ENCODE measurements at regions of chr2 and their contacts with region 1.

Region 1: GRCh38 chr2:1140389-1141003 is 189.8 kb downstream of the SNTG2 start:
- DNase-seq: peak; percentile 70
- ATAC-seq: peak; percentile 69
- H3K4me3 Mint-ChIP-seq: no peak overlapping the region
- H3K27ac Mint-ChIP-seq: no peak overlapping the region
- H3K4me1 Mint-ChIP-seq: peaks cover 24% of the 10 kb centered on the region
- H3K27me3 Mint-ChIP-seq: peaks cover 9% of the 10 kb centered on the region

Region 2: DNA sequence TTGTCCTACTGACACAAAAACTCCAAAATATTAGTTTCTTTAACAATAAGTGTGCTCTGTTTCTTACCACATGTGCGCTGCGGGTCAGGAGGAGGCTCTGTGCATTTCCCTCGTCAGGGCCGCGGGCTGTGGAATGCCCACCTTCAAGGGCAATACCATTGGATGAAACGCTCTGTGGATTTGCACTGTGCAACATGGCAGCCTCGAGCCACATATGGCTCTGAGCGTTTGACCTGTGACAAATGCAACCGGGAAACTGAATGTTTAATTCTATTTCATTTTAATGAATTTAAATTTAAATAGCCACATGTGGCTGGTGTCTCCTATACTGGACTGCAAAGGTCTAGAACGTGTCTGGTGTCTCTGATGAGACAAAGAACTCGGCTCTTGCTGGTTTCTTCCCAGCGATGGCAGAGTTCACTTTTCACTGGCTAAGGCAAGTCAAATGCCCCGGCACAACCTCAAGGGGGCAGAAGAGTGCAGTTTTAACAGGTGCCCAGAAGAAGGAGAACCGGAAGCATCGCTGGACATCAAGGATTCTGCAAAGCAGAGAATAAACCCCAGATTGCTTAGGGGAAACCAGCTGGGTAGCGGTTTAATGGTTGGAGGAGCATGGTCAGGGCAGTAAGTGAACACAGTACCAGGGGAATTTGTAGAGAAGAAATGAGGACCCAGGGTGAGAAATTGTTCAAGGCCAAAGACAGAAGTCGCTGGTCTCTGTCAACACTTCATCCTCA is 426.3 kb before region 1 on chr2:
- CTCF ChIA-PET with region 1: no interaction called
- POLR2A ChIA-PET with region 1: no interaction called
- intact Hi-C with region 1: loop called in 1 of 2 experiments (anchors 10 kb)
- DNase-seq: peak; percentile 71
- ATAC-seq: peak; percentile 68
- H3K4me3 Mint-ChIP-seq: no peak overlapping the region
- H3K27ac Mint-ChIP-seq: no peak overlapping the region
- H3K4me1 Mint-ChIP-seq: no peaks in the 10 kb centered on the region
- H3K27me3 Mint-ChIP-seq: peaks cover 17% of the 10 kb centered on the region

Region 3: DNA sequence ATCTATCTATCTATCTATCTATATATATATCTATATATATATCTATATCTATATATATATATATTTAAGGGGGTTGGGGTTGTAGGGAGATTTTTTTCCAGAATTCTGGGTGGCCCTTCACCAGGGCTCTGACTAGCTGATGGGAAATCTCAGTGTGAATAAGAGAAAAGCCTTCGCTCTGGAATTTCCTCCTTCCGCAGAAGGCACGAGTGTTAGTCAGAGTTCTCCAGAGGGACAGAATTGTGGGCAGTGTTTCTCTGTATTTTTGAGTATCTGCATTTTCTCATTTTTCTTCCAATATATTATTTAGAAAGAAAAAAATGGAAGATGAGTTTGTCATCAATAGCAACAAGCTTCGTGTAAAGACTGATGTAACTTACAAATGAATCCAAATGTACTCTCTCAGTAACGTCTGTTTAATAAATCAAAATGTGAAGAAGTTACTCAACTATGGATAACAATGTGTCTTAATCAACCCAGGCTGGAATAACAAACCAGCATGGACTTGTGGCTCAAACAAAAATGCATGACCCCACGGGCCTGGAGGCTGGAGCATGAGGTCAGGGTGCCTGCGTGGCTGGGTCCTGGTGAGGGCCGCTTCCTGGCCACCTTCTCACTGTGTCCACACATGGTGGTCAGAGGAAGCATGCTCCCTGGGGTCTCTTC is 200.4 kb before region 1 on chr2:
- CTCF ChIA-PET with region 1: no interaction called
- POLR2A ChIA-PET with region 1: no interaction called
- intact Hi-C with region 1: no loop called
- DNase-seq: no peak
- ATAC-seq: no peak
- H3K4me3 Mint-ChIP-seq: no peak overlapping the region
- H3K27ac Mint-ChIP-seq: no peak overlapping the region
- H3K4me1 Mint-ChIP-seq: no peaks in the 10 kb centered on the region
- H3K27me3 Mint-ChIP-seq: peaks cover 8% of the 10 kb centered on the region

Region 4: GRCh38 chr2:950080-950966 is 190.2 kb before region 1 on chr2 and contains the start of gene SNTG2:
- CTCF ChIA-PET with region 1: no interaction called
- POLR2A ChIA-PET with region 1: no interaction called
- intact Hi-C with region 1: loop called in 1 of 2 experiments (anchors 5 kb)
- DNase-seq: peak; percentile 71
- ATAC-seq: peak; percentile 50
- H3K4me3 Mint-ChIP-seq: peak within 1 kb of the TSS; percentile 66
- H3K27ac Mint-ChIP-seq: no peak within 1 kb of the TSS
- H3K4me1 Mint-ChIP-seq: peaks cover 23% of the 10 kb centered on the region
- H3K27me3 Mint-ChIP-seq: peaks cover 40% of the 10 kb centered on the region
- total RNA-seq, gene SNTG2: 0.25 to 0.57 TPM

Region 5: DNA sequence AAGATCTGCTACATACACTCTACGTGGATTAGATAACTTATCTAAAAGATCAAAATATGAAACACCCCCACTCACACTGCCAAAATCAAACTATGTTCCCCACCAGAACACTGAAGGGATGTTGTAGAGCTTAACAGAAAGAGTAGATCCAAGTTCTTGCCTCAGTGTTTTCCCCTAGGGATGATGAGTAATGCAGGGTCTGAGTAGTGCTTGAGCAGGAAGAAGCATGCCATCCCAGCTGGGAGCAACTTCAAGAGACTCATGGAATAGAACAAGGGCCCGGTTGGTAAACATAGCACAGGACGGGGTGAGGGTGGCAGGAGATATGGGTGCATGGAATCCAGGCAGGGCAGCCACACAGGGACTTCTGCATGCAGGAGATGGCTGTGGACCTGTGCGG is 115.5 kb before region 1 on chr2:
- CTCF ChIA-PET with region 1: no interaction called
- POLR2A ChIA-PET with region 1: no interaction called
- intact Hi-C with region 1: no loop called
- DNase-seq: no peak
- ATAC-seq: no peak
- H3K4me3 Mint-ChIP-seq: no peak overlapping the region
- H3K27ac Mint-ChIP-seq: no peak overlapping the region
- H3K4me1 Mint-ChIP-seq: no peaks in the 10 kb centered on the region
- H3K27me3 Mint-ChIP-seq: peaks cover 5% of the 10 kb centered on the region

Region 6: GRCh38 chr2:1605102-1606045 is 464.9 kb after region 1 on chr2:
- CTCF ChIA-PET with region 1: no interaction called
- POLR2A ChIA-PET with region 1: no interaction called
- intact Hi-C with region 1: no loop called
- DNase-seq: no peak
- ATAC-seq: no peak
- H3K4me3 Mint-ChIP-seq: no peak overlapping the region
- H3K27ac Mint-ChIP-seq: no peak overlapping the region
- H3K4me1 Mint-ChIP-seq: no peaks in the 10 kb centered on the region
- H3K27me3 Mint-ChIP-seq: peaks cover 14% of the 10 kb centered on the region